ENCODE measurements at regions of chr9 and their contacts with region 1.

Region 1: DNA sequence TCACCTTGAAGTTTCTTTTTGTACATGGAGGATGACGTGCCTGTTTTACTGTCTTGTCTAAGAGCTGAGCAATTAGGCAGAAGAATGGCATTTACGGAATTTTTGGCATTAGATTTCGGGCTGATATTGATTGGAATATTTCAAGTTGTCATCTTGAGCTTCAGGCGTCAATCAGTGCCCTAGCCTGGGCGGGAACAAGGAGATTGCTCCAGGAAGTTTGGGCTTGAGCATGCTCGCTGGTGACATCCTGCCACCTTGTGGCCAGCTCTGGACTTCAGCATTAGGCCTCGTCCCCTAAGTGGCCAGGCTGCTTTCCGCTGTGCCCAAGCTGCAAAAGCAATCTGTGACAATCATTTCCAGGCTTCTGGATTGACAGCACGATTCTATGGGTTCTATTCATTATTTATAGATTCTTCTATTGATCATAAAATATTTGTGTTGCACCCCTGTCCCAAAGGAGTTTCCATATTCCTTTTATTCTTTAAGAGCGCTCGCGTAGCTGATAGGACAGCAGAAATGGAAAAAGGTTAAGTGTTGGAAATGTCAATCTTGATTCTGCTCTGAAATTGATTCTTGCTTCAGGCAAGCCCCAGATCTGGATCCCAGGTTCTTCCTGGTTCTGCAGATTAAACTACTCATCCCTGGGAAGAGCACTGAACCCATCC is 79.3 kb downstream of the SLC28A3 start:
- DNase-seq: peak; percentile 69
- H3K4me3 ChIP-seq: peak overlapping the region in 1 of 2 experiments; percentile 33; a peak in 1 of 4 replicates
- H3K27ac ChIP-seq: no peak overlapping the region
- H3K4me1 ChIP-seq: peaks cover 0 to 5% of the 10 kb centered on the region in 2 experiments; a peak in 1 of 4 replicates
- H3K27me3 ChIP-seq: no peaks in the 10 kb centered on the region
- CTCF ChIP-seq: peak; percentile 88
- EP300 ChIP-seq: no peak
- RAD21 ChIP-seq: peak; percentile 98

Region 2: GRCh38 chr9:83920927-83921707 is 340.1 kb before region 1 on chr9 and contains the start of gene KIF27:
- CTCF ChIA-PET with region 1: interaction called, 31 read pairs
- POLR2A ChIA-PET with region 1: interaction called, 5 read pairs
- DNase-seq: peak; percentile 96
- H3K4me3 ChIP-seq: peak within 1 kb of the TSS; percentile 54 to 81
- H3K27ac ChIP-seq: peak within 1 kb of the TSS; percentile 85 to 88
- H3K4me1 ChIP-seq: peaks cover 3 to 7% of the 10 kb centered on the region in 2 experiments; a peak in 3 of 4 replicates
- H3K27me3 ChIP-seq: no peaks in the 10 kb centered on the region
- CTCF ChIP-seq: peak; percentile 38; the same call in 1 of the 2 replicates
- EP300 ChIP-seq: no peak
- RAD21 ChIP-seq: no peak
- polyA plus RNA-seq, gene KIF27: 0.78 and 0.81 TPM in 2 replicates

Region 3: DNA sequence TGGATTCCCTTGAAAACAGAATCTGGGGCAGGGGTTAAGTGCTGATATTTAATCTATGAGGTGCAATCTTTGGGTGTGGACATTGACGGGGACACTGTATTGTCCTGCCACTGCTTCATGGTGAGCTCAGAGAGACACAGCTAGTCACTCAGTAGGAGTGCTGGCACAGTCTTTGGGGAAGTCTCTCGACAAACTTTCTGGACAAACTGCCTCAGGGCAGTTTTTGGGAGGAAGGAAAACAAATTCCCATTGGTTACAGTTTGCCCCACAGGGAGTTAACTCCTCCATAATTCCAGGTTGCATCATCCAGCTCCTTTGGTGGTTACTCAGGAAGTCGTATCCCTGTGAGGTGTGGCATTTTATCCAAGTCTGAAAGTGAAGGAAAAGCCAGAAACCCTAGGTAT is 299.0 kb before region 1 on chr9:
- CTCF ChIA-PET with region 1: interaction called, 21 read pairs
- POLR2A ChIA-PET with region 1: no interaction called
- DNase-seq: no peak
- H3K4me3 ChIP-seq: no peak overlapping the region
- H3K27ac ChIP-seq: no peak overlapping the region
- H3K4me1 ChIP-seq: peaks cover 2 to 7% of the 10 kb centered on the region in 2 experiments; a peak in 2 of 4 replicates
- H3K27me3 ChIP-seq: no peaks in the 10 kb centered on the region
- CTCF ChIP-seq: no peak
- EP300 ChIP-seq: no peak
- RAD21 ChIP-seq: no peak

Region 4: GRCh38 chr9:84170521-84171141 is 90.6 kb before region 1 on chr9:
- CTCF ChIA-PET with region 1: interaction called, 16 read pairs
- POLR2A ChIA-PET with region 1: no interaction called
- DNase-seq: peak; percentile 46
- H3K4me3 ChIP-seq: no peak overlapping the region; a peak in 1 of 4 replicates
- H3K27ac ChIP-seq: peak overlapping the region; percentile 77
- H3K4me1 ChIP-seq: peaks cover 10 to 23% of the 10 kb centered on the region in 2 experiments
- H3K27me3 ChIP-seq: no peaks in the 10 kb centered on the region
- CTCF ChIP-seq: no peak
- EP300 ChIP-seq: peak in 1 of 2 experiments; percentile 87; a peak in 1 of 4 replicates
- RAD21 ChIP-seq: no peak

Region 5: DNA sequence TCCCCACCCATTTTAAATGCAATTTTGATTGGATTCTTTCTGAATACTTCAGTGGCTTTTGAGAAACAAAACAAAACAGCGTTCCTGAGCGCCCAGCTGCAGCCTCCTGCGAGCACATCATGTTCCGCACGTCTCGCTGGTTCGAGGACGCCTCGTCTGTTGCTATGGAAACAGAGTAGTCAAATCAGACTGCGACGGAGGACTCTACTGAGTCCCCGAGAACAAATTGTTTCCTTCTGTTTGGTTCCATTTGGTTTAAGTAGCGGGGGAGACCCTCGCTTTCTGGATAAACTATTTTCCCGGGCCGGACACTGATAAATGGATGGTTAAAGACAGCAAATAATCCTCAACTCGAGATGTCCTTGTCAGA is 10.3 kb after region 1 on chr9:
- CTCF ChIA-PET with region 1: interaction called, 18 read pairs
- POLR2A ChIA-PET with region 1: no interaction called
- DNase-seq: peak; percentile 56
- H3K4me3 ChIP-seq: peak overlapping the region in 1 of 2 experiments; percentile 31; a peak in 2 of 4 replicates
- H3K27ac ChIP-seq: no peak overlapping the region
- H3K4me1 ChIP-seq: peaks cover 0 to 7% of the 10 kb centered on the region in 2 experiments; a peak in 1 of 4 replicates
- H3K27me3 ChIP-seq: no peaks in the 10 kb centered on the region
- CTCF ChIP-seq: no peak
- EP300 ChIP-seq: no peak
- RAD21 ChIP-seq: no peak

Region 6: DNA sequence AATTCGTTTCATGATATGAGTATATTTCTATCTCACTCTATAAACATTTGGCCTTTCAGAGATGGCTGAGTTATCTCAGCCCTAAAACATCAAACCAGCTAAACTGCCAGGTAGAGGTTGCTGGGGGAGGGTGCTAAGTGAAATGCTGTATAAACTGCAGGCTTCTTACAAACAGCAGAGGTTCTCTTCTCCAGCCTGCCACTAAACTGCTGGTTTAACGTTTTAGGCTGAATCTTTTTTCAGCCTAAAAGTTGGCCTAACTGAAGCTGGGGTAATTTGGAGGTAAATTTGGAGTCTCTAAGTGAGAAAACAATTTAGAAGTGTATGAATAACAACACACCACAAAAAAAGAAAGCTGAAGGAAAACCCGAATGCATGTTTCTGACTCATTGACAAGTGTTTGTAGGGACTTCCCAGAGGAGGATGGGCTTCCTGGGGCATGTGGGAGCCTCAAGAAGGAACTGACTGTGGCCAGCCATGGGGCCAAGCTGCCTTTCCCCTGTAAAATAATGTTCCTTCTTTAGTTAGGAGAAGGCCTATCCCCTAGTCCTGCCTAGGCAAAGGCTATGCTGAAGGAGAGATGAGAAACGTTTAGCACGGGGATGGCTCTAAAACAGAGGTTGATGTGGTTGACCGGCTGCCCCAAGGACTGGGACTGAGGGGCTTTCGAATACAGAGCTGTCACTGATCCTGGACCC is 35.1 kb after region 1 on chr9:
- CTCF ChIA-PET with region 1: interaction called, 12 read pairs
- POLR2A ChIA-PET with region 1: no interaction called
- DNase-seq: no peak
- H3K4me3 ChIP-seq: 0 out of 4 replicates have a peak overlapping the region, but pooled peaks of 1 of the 2 experiments have one; percentile 2
- H3K27ac ChIP-seq: peak overlapping the region in 1 of 2 experiments; percentile 80; a peak in 3 of 4 replicates
- H3K4me1 ChIP-seq: peaks cover 0 to 19% of the 10 kb centered on the region in 2 experiments; a peak in 2 of 4 replicates
- H3K27me3 ChIP-seq: no peaks in the 10 kb centered on the region
- CTCF ChIP-seq: no peak
- EP300 ChIP-seq: peak in 1 of 2 experiments; percentile 22; a peak in 1 of 4 replicates
- RAD21 ChIP-seq: no peak